GM10248 (cell line): ENCODE measurements at regions of chr5 and their contacts with region 1.

Region 1: DNA sequence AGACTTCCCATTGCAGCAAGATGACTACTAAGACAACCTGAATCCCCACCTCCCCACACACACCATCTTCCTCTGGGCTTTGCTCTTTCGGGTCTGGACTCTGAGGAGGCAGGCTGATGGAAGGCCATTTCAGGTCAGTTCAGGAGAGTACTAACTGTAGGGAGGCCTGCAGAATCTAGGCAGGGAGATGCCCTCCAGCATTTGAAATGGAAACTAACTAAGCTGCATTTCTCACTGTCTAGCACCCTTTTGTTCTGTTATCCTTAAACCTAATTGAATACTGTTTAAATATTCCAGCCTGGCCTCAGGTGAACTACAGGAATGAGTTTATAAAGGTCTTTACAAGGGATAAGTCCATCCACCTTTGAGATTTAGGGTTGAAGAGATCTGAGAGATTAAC is 4.9 kb upstream of the TBCA start:
- DNase-seq: no peak
- CTCF ChIP-seq: no peak

Region 2: DNA sequence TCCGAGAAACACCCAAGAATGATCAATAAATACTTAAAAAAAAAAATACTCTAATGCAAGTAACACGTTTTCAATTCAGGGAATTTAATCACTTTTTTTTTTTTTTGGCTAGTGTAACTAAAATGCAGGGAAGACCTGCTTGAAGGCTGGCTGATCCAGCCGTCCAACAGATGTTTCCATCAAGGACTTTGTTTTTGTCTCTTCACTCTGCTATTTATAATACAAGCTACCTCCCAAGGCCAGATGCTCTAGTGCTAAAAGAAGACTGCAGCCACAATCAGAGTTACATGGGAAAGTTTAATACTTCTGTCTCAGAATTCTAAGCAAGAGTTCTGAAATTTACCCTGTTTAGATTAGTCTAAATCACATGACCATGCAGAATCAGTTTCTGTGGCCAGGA is 19.5 kb before region 1 on chr5:
- CTCF ChIA-PET with region 1: no interaction called
- POLR2A ChIA-PET with region 1: no interaction called
- DNase-seq: no peak
- CTCF ChIP-seq: no peak

Region 3: GRCh38 chr5:78447775-78448424 is 666.8 kb after region 1 on chr5:
- CTCF ChIA-PET with region 1: no interaction called
- POLR2A ChIA-PET with region 1: interaction called, 10 read pairs
- DNase-seq: no peak
- CTCF ChIP-seq: no peak